ENCODE measurements at regions of chr18 and their contacts with region 1.

Region 1: GRCh38 chr18:6004683-6005082 is 109.4 kb upstream of the TMEM200C start:
- DNase-seq: peak; percentile 83
- ATAC-seq: peak; percentile 99
- H3K4me3 ChIP-seq: peak overlapping the region; percentile 31; the same call in 1 of the 2 replicates
- H3K27ac ChIP-seq: peak overlapping the region; percentile 58
- H3K4me1 ChIP-seq: peaks cover 16% of the 10 kb centered on the region
- H3K27me3 ChIP-seq: no peaks in the 10 kb centered on the region
- CTCF ChIP-seq: no peak
- EP300 ChIP-seq: peak; percentile 67 to 93; a peak in 3 of 4 replicates
- POLR2A ChIP-seq: no peak
- RAD21 ChIP-seq: no peak; the same call in 1 of the 2 replicates

Region 2: GRCh38 chr18:5975111-5976002 is 29.3 kb before region 1 on chr18:
- CTCF ChIA-PET with region 1: no interaction called
- POLR2A ChIA-PET with region 1: no interaction called
- RAD21 ChIA-PET with region 1: no interaction called
- SMC1A ChIA-PET with region 1: no interaction called
- in situ Hi-C with region 1: no loop called
- intact Hi-C with region 1: loop called (anchors 1 kb)
- DNase-seq: peak; percentile 87
- ATAC-seq: peak; percentile 89
- H3K4me3 ChIP-seq: peak overlapping the region; percentile 24; the same call in 1 of the 2 replicates
- H3K27ac ChIP-seq: peak overlapping the region; percentile 82
- H3K4me1 ChIP-seq: peaks cover 64% of the 10 kb centered on the region
- H3K27me3 ChIP-seq: no peaks in the 10 kb centered on the region; a peak in 1 of 4 replicates
- CTCF ChIP-seq: peak in 1 of 3 experiments; percentile 11; a peak in 2 of 6 replicates
- EP300 ChIP-seq: peak; percentile 64 to 78; a peak in 3 of 4 replicates
- POLR2A ChIP-seq: no peak
- RAD21 ChIP-seq: peak; percentile 3; the same call in 1 of the 2 replicates